Psoas muscle (tissue), 8 donors: ENCODE measurements at regions of chr15 and their contacts with region 1.

Region 1: DNA sequence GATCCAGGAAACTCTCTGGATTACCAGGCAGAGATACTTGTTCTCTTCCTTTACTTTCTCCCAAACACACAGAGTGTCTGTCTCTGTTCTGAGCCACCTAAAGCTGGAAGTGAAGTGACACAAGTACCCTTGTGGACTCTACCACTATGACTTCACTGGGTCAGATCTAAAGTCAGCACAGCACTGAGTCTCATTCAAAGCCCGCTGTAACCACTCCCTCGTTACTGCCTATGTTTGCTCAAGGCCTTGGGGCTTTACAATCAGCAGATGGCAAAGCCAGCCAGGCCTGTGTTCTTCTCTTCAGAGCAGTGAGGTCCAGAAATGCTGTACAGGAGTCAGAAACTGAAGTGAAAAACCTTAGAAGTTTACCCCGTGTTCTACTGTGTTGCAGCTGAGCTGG is 588.3 kb upstream of the SEMA6D start:
- DNase-seq: no peak
- ATAC-seq: no peak
- H3K4me3 ChIP-seq: no peak overlapping the region
- H3K27ac ChIP-seq: no peak overlapping the region
- H3K4me1 ChIP-seq: no peaks in the 10 kb centered on the region
- H3K27me3 ChIP-seq: no peaks in the 10 kb centered on the region
- CTCF ChIP-seq: no peak

Region 2: GRCh38 chr15:47177177-47177576 is 48.1 kb after region 1 on chr15:
- intact Hi-C with region 1: loop called in 1 of 2 experiments (anchors 5 kb)
- DNase-seq: no peak
- ATAC-seq: no peak
- H3K4me3 ChIP-seq: no peak overlapping the region
- H3K27ac ChIP-seq: no peak overlapping the region
- H3K4me1 ChIP-seq: no peaks in the 10 kb centered on the region
- H3K27me3 ChIP-seq: peaks cover 0 to 16% (median 0%) of the 10 kb centered on the region in 3 donors
- CTCF ChIP-seq: no peak